ENCODE measurements at regions of chr1 and their contacts with region 1.

Region 1: DNA sequence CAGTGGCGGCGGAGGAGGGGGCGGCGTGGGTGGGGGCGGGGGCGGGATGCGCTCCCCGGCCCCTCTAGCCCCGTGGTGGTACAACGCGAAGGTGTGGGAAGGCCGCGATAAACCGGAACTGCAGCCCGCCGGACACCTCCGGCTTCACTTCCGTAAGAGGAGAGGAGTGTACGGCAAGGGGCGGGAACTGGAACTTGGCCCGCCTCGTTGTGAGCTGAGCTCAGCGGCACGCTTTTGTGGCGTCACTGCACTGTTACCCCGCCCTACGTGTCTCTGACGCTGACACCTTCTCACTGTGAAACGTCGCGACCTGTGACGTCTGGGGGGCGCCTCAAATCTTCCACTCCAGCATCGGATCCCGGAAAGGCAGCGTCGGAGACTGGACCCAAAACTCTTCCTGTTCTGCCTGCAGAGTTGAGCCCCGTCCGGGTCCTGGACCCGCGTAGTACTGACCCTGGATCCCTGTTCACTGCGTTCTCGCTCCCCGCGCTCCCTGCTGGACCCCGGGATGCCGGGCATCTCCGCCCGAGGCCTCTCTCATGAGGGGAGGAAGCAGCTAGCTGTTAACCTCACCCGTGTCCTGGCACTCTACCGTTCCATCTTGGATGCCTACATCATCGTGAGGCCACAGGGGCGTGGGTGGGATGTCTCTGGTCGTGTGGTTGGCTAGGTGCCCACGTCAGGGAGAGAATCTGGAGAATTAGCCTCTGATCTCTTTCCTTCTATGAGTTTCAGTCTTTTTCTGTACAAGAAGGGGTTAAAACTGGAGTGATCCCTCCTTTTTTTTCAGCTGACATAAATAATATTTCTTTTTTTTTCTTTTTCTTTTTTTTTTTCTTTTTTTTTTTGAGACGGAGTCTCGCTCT is at the start of gene ISG20L2:
- DNase-seq: peak; percentile 99
- ATAC-seq: peak; percentile 90
- H3K4me3 Mint-ChIP-seq: no peak within 1 kb of the TSS
- H3K27ac Mint-ChIP-seq: no peak within 1 kb of the TSS
- H3K4me1 Mint-ChIP-seq: peaks cover 29% of the 10 kb centered on the region
- H3K27me3 Mint-ChIP-seq: no peaks in the 10 kb centered on the region
- total RNA-seq, gene ISG20L2: 56.3 to 58.8 TPM

Region 2: DNA sequence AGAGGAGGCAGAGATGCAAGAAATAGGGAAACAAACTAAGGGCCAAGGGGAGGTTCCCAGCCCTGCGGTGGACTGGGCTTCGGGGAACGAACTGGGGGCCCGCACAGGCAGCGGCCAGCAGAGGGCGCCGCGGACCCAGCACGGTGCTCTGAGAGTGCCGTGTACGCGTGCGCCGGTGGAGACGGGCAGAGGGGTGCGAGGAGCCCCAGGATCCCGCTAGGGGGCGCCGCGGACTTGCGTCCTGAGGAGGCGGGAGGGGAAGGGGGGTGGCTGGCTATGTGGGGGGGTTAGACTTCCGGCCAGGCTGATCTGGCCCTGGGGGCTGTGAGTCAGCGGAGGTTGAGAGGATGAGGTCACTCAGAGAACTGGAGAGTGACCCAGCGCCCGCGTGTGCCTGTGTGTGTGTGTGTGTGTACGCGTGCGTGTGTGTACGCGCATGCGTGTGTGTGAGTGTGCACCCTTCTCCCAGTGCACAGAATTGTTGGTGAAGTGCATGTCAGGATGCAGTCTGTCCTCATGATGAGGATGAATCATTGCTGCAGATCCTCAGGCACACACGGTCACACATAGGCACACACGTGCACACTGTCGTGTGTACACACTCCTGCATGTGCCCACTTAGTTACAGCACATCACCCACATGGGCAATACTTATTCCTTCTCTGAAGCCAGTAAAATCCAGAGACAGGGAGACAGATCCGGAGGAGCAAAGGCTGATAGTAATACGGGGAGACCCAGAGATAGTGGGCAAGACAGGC is 68.7 kb before region 1 on chr1:
- CTCF ChIA-PET with region 1: interaction called, 110 read pairs
- POLR2A ChIA-PET with region 1: interaction called, 4 read pairs
- DNase-seq: peak; percentile 96
- ATAC-seq: peak; percentile 87
- H3K4me3 Mint-ChIP-seq: peak overlapping the region; percentile 72
- H3K27ac Mint-ChIP-seq: peak overlapping the region; percentile 90
- H3K4me1 Mint-ChIP-seq: peaks cover 77% of the 10 kb centered on the region
- H3K27me3 Mint-ChIP-seq: peaks cover 29% of the 10 kb centered on the region

Region 3: GRCh38 chr1:156740679-156741612 is 12.1 kb after region 1 on chr1 and contains the start of gene MRPL24:
- CTCF ChIA-PET with region 1: interaction called, 79 read pairs
- POLR2A ChIA-PET with region 1: interaction called, 68 read pairs
- DNase-seq: peak; percentile 99
- ATAC-seq: peak; percentile 89
- H3K4me3 Mint-ChIP-seq: peak within 1 kb of the TSS; percentile 99
- H3K27ac Mint-ChIP-seq: peak within 1 kb of the TSS; percentile 98
- H3K4me1 Mint-ChIP-seq: peaks cover 59% of the 10 kb centered on the region
- H3K27me3 Mint-ChIP-seq: no peaks in the 10 kb centered on the region
- total RNA-seq, gene MRPL24: 59.8 to 62.6 TPM

Region 4: GRCh38 chr1:156786655-156787054 is 57.8 kb after region 1 on chr1:
- CTCF ChIA-PET with region 1: interaction called, 206 read pairs
- POLR2A ChIA-PET with region 1: no interaction called
- DNase-seq: no peak
- ATAC-seq: no peak
- H3K4me3 Mint-ChIP-seq: no peak overlapping the region
- H3K27ac Mint-ChIP-seq: peak overlapping the region; percentile 56
- H3K4me1 Mint-ChIP-seq: peaks cover 18% of the 10 kb centered on the region
- H3K27me3 Mint-ChIP-seq: no peaks in the 10 kb centered on the region

Region 5: DNA sequence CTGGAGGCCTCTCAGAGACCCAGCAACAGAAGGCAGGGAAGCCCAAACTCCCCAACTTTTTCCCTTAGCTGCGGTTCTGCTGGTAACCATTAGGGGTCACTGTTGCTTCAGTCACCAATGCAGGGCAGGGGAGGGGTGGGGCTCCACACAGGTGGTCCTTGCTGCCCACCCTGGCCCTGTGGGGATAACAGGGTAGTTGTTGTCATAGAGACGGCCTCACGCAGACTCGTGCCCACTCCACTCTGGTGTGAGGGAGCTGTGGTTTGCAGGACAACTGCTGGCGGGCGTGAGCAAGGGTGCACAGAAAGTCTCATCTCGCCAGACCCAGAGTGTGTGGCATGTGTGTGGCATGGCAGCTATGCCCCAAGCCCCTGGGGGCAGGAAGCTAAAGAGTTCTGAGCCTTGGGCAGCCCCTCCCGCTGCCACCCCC is 110.2 kb after region 1 on chr1:
- CTCF ChIA-PET with region 1: interaction called, 20 read pairs
- POLR2A ChIA-PET with region 1: interaction called, 8 read pairs
- DNase-seq: peak; percentile 67
- ATAC-seq: peak; percentile 66
- H3K4me3 Mint-ChIP-seq: no peak overlapping the region
- H3K27ac Mint-ChIP-seq: no peak overlapping the region
- H3K4me1 Mint-ChIP-seq: peaks cover 48% of the 10 kb centered on the region
- H3K27me3 Mint-ChIP-seq: peaks cover 17% of the 10 kb centered on the region

Region 6: GRCh38 chr1:156892190-156893047 is 163.6 kb after region 1 on chr1:
- CTCF ChIA-PET with region 1: interaction called, 89 read pairs
- POLR2A ChIA-PET with region 1: interaction called, 3 read pairs
- DNase-seq: peak; percentile 92
- ATAC-seq: peak; percentile 97
- H3K4me3 Mint-ChIP-seq: peak overlapping the region; percentile 67
- H3K27ac Mint-ChIP-seq: no peak overlapping the region
- H3K4me1 Mint-ChIP-seq: peaks cover 29% of the 10 kb centered on the region
- H3K27me3 Mint-ChIP-seq: peaks cover 50% of the 10 kb centered on the region